Colonic mucosa (tissue), 4 donors: ENCODE measurements at regions of chr11 and their contacts with region 1.

Region 1: GRCh38 chr11:59678118-59678812 is 9.4 kb upstream of the PATL1 start:
- DNase-seq: no peak
- H3K4me3 ChIP-seq: no peak overlapping the region
- H3K27ac ChIP-seq: no peak overlapping the region
- H3K4me1 ChIP-seq: no peaks in the 10 kb centered on the region
- H3K27me3 ChIP-seq: no peaks in the 10 kb centered on the region
- CTCF ChIP-seq: no peak

Region 2: GRCh38 chr11:59158206-59159068 is 519.8 kb before region 1 on chr11:
- intact Hi-C with region 1: no loop called
- DNase-seq: peak; percentile 60
- H3K4me3 ChIP-seq: no peak overlapping the region
- H3K27ac ChIP-seq: no peak overlapping the region
- H3K4me1 ChIP-seq: no peaks in the 10 kb centered on the region
- H3K27me3 ChIP-seq: no peaks in the 10 kb centered on the region
- CTCF ChIP-seq: peak; percentile 66

Region 3: DNA sequence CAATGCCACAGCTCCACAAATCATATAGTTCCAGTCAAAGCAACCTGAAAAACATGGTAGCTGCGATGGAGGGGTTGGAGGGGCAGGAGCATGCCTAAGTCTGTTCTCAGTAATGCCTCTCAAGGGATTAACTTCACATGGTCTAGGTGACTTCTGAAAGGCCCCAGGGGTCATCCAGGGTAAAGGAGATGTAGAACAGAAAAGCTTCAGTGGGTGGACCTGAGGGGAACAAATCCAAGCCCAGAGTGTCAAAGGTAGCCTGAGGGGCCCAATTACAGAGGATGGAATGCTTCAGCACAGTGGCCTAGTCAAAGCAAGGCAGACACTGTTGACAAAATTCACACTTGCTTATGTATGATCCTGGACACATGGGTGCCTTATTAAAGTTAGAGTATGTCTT is 143.6 kb before region 1 on chr11:
- intact Hi-C with region 1: loop called (anchors 5 kb)
- DNase-seq: no peak
- H3K4me3 ChIP-seq: no peak overlapping the region
- H3K27ac ChIP-seq: no peak overlapping the region
- H3K4me1 ChIP-seq: no peaks in the 10 kb centered on the region
- H3K27me3 ChIP-seq: no peaks in the 10 kb centered on the region
- CTCF ChIP-seq: no peak

Region 4: GRCh38 chr11:59573234-59573633 is 105.0 kb before region 1 on chr11:
- intact Hi-C with region 1: no loop called
- DNase-seq: no peak
- H3K4me3 ChIP-seq: no peak overlapping the region
- H3K27ac ChIP-seq: no peak overlapping the region
- H3K4me1 ChIP-seq: no peaks in the 10 kb centered on the region
- H3K27me3 ChIP-seq: no peaks in the 10 kb centered on the region
- CTCF ChIP-seq: no peak

Region 5: GRCh38 chr11:59698506-59698905 is 20.2 kb after region 1 on chr11:
- intact Hi-C with region 1: no loop called
- DNase-seq: no peak
- H3K4me3 ChIP-seq: no peak overlapping the region
- H3K27ac ChIP-seq: no peak overlapping the region
- H3K4me1 ChIP-seq: no peaks in the 10 kb centered on the region
- H3K27me3 ChIP-seq: no peaks in the 10 kb centered on the region
- CTCF ChIP-seq: no peak